ENCODE measurements at regions of chr2 and their contacts with region 1.

Region 1: DNA sequence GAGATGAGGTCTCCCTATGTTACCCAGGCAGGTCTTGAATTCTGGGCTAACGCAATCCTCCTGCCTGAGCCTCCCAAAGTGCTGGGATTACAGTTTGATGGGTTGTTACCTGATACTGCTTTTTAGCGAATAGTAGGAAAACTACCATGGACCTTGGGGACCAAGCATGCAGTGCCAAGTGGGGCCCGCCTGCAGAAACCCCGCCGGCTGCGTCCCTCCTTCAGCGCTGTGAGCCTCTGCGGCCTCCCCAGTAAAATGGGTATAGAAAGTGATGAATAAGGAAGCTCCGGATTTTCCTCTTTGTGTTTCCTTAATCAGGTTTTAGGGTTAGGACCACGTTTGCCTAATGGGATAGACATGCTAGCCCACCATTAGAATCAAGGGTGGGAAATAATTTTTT is 30.4 kb downstream of the RAMP1 start:
- H3K4me3 ChIP-seq: no peak overlapping the region
- H3K27ac ChIP-seq: no peak overlapping the region
- H3K4me1 ChIP-seq: 0 out of 2 replicates have a peak, but pooled peaks cover 2% of the 10 kb centered on the region
- CTCF ChIP-seq: no peak

Region 2: GRCh38 chr2:237935740-237936452 is 46.1 kb after region 1 on chr2:
- CTCF ChIA-PET with region 1: interaction called, 10 read pairs
- POLR2A ChIA-PET with region 1: no interaction called
- H3K4me3 ChIP-seq: no peak overlapping the region
- H3K27ac ChIP-seq: no peak overlapping the region
- H3K4me1 ChIP-seq: no peaks in the 10 kb centered on the region
- CTCF ChIP-seq: no peak

Region 3: GRCh38 chr2:238127317-238128200 is 237.7 kb after region 1 on chr2:
- CTCF ChIA-PET with region 1: no interaction called
- POLR2A ChIA-PET with region 1: no interaction called
- H3K4me3 ChIP-seq: no peak overlapping the region
- H3K27ac ChIP-seq: no peak overlapping the region
- H3K4me1 ChIP-seq: no peaks in the 10 kb centered on the region
- CTCF ChIP-seq: no peak